Dendritic cell treated with granulocyte-macrophage colony-stimulating factor and Interleukin-4, amounts not matched to agents 40 ng/mL and 50 ng/mL, for 4 days (primary cell): ENCODE measurements at regions of chr5 and their contacts with region 1.

Region 1: GRCh38 chr5:35856765-35857291 is at the start of gene IL7R:
- H3K4me3 Mint-ChIP-seq: no peak within 1 kb of the TSS
- H3K27ac Mint-ChIP-seq: peak within 1 kb of the TSS; percentile 30
- H3K4me1 Mint-ChIP-seq: peaks cover 32% of the 10 kb centered on the region
- H3K27me3 Mint-ChIP-seq: no peaks in the 10 kb centered on the region

Region 2: GRCh38 chr5:35822511-35822910 is 34.3 kb before region 1 on chr5:
- intact Hi-C with region 1: loop called (anchors 5 kb)
- H3K4me3 Mint-ChIP-seq: no peak overlapping the region
- H3K27ac Mint-ChIP-seq: no peak overlapping the region
- H3K4me1 Mint-ChIP-seq: peaks cover 11% of the 10 kb centered on the region
- H3K27me3 Mint-ChIP-seq: peaks cover 5% of the 10 kb centered on the region

Region 3: GRCh38 chr5:35902046-35902676 is 45.3 kb after region 1 on chr5:
- intact Hi-C with region 1: no loop called
- H3K4me3 Mint-ChIP-seq: no peak overlapping the region
- H3K27ac Mint-ChIP-seq: no peak overlapping the region
- H3K4me1 Mint-ChIP-seq: no peaks in the 10 kb centered on the region
- H3K27me3 Mint-ChIP-seq: no peaks in the 10 kb centered on the region

Region 4: DNA sequence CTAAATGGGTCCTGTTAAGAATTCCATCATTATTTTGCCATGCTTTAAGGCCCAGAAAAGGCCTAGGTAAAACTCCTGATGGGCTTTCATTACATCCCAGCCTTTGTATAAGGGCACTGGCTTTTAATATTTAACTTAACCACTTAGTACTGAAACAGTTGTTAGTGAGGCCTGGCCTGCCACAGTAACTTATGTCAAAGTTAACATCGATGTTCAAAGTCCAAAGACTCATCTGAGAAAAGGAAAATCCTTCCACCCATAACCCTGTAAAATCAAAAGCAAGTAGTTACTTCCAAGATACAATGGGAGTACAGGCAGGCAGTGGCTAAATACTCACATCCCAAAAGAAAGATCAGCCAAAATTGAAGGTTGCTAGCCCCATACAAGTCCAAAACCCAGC is 149.3 kb after region 1 on chr5:
- intact Hi-C with region 1: no loop called
- H3K4me3 Mint-ChIP-seq: no peak overlapping the region
- H3K27ac Mint-ChIP-seq: no peak overlapping the region
- H3K4me1 Mint-ChIP-seq: no peaks in the 10 kb centered on the region
- H3K27me3 Mint-ChIP-seq: no peaks in the 10 kb centered on the region